Dorsolateral prefrontal cortex (tissue), 120 donors: ENCODE measurements at regions of chr13 and their contacts with region 1.

Region 1: GRCh38 chr13:79775830-79776229 is 294.9 kb downstream of the NDFIP2 start:
- DNase-seq: peak in 5 of 10 donors; percentile 40 to 68 (median 50)
- H3K4me3 ChIP-seq: no peak overlapping the region
- H3K27ac ChIP-seq: no peak overlapping the region
- H3K27me3 ChIP-seq: no peaks in the 10 kb centered on the region
- CTCF ChIP-seq: peak in 55 of 56 donors; percentile 52 to 83 (median 72)

Region 2: DNA sequence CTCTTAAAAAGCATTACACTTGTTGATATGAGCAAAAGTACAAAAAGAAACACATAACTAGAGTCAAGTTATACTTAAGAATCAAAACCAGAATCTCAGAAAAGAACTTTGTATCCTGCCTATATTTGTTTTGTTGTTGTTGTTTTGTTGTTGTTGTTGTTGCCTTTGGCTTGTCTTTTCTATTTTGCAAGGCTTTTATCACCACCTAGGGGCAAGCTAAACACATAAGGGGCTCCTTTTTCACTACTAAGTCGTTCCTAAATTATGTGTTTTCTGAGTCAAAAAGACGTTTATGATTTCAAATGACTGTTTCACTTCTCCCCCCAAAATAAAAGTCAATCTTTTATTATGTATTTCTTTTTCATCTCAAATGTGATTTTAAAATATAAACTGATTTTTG is 619.9 kb before region 1 on chr13:
- intact Hi-C with region 1: no loop called
- DNase-seq: no peak
- H3K4me3 ChIP-seq: no peak overlapping the region
- H3K27ac ChIP-seq: no peak overlapping the region
- H3K27me3 ChIP-seq: peaks cover 0 to 9% (median 0%) of the 10 kb centered on the region in 45 donors
- CTCF ChIP-seq: no peak

Region 3: GRCh38 chr13:80030491-80030890 is 254.7 kb after region 1 on chr13:
- intact Hi-C with region 1: loop called in 1 of 2 experiments (anchors 10 kb)
- DNase-seq: peak in 1 of 10 donors; percentile 19
- H3K4me3 ChIP-seq: no peak overlapping the region
- H3K27ac ChIP-seq: no peak overlapping the region
- H3K27me3 ChIP-seq: no peaks in the 10 kb centered on the region
- CTCF ChIP-seq: peak in 40 of 56 donors; percentile 6 to 50 (median 32)